OCI-LY7 (cell line): ENCODE measurements at regions of chr6 and their contacts with region 1.

Region 1: GRCh38 chr6:73610444-73611275 is 43.1 kb downstream of the SLC17A5 start:
- DNase-seq: peak; percentile 51
- H3K4me3 ChIP-seq: no peak overlapping the region
- H3K27ac ChIP-seq: no peak overlapping the region
- H3K4me1 ChIP-seq: no peaks in the 10 kb centered on the region
- CTCF ChIP-seq: peak; percentile 83

Region 2: GRCh38 chr6:73409395-73409794 is 201.3 kb before region 1 on chr6:
- CTCF ChIA-PET with region 1: no interaction called
- POLR2A ChIA-PET with region 1: no interaction called
- intact Hi-C with region 1: no loop called
- DNase-seq: no peak
- H3K4me3 ChIP-seq: no peak overlapping the region
- H3K27ac ChIP-seq: no peak overlapping the region
- H3K4me1 ChIP-seq: no peaks in the 10 kb centered on the region
- CTCF ChIP-seq: no peak

Region 3: GRCh38 chr6:73515204-73515655 is 95.4 kb before region 1 on chr6:
- CTCF ChIA-PET with region 1: no interaction called
- POLR2A ChIA-PET with region 1: interaction called, 5 read pairs
- intact Hi-C with region 1: loop called (anchors 2 kb)
- DNase-seq: peak; percentile 33
- H3K4me3 ChIP-seq: peak overlapping the region; percentile 58
- H3K27ac ChIP-seq: peak overlapping the region; percentile 64
- H3K4me1 ChIP-seq: peaks cover 35% of the 10 kb centered on the region
- CTCF ChIP-seq: no peak